GM13977 (cell line): ENCODE measurements at regions of chr12 and their contacts with region 1.

Region 1: DNA sequence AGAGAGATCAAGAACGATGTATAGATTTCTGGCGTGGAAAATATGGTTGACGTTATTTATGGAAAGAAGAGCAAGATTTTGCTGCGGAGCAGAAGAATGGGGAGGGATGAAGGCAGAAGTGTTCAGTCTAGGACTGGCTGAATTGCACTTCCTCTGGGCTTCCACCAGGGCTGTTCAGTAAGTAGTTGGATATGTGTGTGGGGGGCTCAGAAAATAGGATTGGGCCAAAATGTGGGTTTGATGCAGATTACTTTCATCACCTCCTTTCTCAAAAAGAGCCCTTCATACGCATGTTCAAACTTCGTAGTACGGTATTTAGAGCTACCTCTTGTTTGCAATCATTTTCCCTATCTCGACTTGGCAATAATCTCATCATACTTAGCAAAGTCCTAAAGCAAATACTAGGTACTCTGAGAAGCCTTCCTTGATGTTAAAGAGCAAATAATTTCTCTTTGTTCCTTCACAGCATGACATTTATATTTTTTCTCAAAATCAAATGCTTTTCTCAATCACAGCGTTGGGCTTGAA is 349.4 kb downstream of the NELL2 start:
- DNase-seq: no peak
- CTCF ChIP-seq: no peak

Region 2: GRCh38 chr12:44431647-44432343 is 94.9 kb before region 1 on chr12:
- in situ Hi-C with region 1: loop called (anchors 25 kb)
- DNase-seq: no peak
- CTCF ChIP-seq: no peak

Region 3: DNA sequence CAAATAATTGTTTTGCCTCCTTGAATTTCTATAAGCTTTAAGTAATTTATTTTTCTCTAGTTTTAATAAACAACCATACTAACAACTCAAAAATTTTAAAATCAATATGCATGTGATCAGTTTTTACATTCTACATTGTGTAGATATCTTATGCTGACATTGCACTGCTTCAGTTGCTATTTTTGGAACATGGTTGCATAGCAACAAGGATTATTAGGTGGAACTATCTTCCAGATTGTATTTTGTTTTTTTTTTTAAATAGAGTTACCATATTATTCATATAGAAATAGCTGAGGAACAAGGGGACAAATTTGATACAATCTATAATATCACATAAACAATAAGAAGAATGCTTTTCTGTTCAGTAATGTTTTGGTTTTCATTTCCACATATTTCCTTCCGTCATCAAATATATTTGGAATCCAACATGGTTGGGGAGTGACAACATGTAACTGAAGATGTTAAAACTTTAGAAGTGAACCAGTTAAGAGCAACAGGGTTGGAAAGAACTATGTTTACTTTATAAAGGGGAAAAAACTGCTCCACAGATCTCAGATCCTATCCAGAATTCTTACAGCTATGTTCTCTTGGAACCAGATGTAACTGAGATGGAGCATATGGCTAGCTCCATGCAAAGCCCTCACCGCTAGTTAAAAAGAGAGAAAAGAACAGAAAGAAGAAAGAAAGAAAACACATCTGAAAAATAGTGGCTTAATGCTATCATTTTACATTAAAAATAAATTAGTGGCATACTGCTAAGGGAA is 113.9 kb after region 1 on chr12:
- in situ Hi-C with region 1: no loop called
- DNase-seq: no peak
- CTCF ChIP-seq: no peak